Posterior cingulate gyrus (tissue), 11 donors: ENCODE measurements at regions of chr11 and their contacts with region 1.

Region 1: DNA sequence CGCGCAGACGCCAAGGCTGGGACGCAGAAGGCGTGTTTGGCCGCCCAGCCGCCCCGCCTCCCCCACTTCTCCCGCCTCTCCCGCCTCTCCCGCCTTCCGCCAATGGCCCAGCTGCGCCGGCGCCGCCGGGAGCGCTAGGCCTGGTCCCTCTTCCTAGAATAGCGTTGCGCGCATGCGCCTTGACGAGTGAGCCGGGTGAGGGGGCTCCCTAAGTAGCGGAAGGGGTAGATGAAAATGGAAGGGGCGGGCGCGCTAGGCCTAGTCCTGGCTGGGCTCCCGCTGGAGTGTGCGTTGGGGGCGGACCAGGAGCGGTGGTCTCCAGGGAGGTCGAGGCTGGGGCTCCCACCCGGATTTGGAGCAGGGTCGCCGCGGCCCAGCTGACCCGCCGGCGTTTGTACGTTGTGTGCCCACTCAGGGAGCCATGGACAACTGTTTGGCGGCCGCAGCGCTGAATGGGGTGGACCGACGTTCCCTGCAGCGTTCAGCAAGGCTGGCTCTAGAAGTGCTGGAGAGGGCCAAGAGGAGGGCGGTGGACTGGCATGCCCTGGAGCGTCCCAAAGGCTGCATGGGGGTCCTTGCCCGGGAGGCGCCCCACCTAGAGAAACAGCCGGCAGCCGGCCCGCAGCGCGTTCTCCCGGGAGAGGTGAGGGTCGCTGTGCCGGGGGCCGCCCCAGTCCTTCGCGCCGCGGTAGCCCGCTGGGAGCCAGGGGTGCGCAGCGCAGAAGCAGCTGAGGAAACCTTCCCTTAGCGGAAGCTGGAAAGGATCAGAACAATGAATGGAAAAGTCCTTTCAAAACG is at the start of gene AKIP1:
- DNase-seq: peak; percentile 91 to 99 (median 95)

Region 2: DNA sequence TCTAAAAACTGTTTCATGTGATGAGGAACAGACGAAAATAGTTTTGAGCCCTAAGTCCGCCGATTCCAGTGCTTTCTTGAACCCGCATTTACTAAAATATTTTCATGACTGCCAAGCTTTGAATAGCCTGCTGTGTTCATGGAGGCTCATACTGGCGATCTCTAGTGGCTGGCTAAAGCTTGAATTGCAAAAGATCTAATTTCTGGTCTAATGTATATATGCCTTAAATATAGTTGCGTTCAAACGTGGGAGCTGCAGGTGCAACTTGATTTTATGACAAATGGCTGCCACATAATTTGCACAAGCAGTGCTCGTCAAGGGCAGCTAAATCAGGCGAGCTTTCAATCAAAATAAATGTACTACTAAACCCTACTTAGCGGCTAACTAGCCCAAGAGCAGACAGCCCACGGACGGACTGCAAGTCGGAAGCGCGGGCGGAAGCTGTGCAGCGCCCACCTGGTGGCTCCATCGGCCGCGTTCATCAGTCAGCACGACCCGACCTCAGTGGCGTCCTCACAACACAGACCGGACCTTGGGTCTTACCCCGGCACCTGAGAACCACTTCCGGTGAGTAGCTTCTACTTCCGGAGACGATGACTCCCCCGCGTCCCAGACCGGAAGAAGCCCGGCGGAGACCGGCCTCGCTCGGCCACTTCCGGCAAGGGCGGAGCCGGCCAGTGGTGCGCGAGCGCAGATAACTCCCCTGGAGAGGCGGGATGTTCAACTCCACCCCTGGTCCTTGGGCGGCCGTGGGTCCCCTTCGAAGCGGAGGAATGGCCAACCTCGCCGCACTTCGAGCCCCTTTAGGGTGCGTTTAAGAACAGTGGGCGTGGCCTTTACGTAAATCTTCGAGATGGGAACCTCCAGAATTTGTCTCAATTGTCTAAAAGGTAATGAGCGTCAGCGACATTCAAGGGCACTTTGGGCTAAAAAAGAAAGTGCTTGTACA is 222.5 kb before region 1 on chr11:
- intact Hi-C with region 1: loop called (anchors 10 kb)
- DNase-seq: peak; percentile 91 to 99 (median 94)

Region 3: GRCh38 chr11:8813658-8814057 is 97.6 kb before region 1 on chr11:
- intact Hi-C with region 1: loop called (anchors 2 kb)
- DNase-seq: peak; percentile 40 to 96 (median 73)

Region 4: GRCh38 chr11:8870411-8871170 is 40.6 kb before region 1 on chr11:
- intact Hi-C with region 1: loop called (anchors 2 kb)
- DNase-seq: peak; percentile 19 to 92 (median 58)

Region 5: DNA sequence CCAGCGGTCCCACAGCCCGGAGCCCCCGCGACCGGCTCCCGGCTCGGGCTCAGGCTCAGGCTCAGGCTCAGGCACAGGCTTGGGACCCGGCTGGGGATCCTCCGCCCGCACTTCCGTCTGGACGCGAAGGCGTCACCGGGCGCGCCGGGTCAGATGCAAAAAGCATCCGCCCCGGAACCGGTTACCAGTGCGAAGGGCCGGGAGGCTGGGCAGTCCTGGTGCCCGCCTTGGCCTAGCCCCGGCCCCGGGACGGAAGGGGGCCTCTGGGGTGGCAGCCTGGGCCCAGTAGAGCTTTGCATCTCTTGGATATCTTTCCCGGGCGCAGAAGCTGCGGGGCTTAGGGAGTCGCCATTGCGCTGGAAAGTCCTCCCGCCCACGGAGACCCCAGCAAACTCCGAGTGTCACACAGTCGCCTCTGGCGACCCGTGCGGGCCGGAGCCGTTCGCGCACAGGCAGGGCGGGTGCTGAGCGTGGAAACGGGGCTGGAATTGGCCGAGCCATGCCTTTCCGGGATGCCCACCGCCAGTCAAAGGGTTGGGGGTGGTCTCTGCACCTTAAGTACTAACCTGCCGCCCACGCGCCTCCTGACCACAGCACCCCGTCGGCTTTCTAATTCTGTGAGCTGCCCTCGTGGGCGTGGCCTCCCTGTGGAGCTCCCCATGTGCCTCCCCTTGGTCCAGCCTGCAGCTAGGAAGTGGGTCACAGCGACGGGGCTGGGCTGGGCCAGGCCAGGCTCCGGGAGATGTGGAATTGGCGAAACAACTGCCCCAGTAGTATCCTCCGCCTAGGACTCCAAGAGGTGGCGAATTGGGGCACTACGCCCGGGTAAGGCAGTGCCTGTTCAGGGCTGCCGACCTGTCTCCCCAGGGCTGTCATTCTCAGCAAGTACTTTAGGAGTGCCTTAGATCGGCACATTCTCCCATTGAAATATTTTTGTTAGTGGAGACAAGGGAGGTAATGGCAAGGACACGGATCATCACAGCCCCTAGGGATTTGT is 53.4 kb after region 1 on chr11 and contains the start of gene TMEM9B:
- intact Hi-C with region 1: loop called (anchors 5 kb)
- DNase-seq: peak; percentile 83 to 98 (median 92)

Region 6: GRCh38 chr11:8983552-8983951 is 72.3 kb after region 1 on chr11:
- intact Hi-C with region 1: no loop called
- DNase-seq: no peak

Region 7: GRCh38 chr11:9137293-9138132 is 226.3 kb after region 1 on chr11:
- intact Hi-C with region 1: loop called (anchors 5 kb)
- DNase-seq: peak; percentile 61 to 97 (median 82)